CD4-positive, alpha-beta T cell (primary cell): ENCODE measurements at regions of chr5 and their contacts with region 1.

Region 1: DNA sequence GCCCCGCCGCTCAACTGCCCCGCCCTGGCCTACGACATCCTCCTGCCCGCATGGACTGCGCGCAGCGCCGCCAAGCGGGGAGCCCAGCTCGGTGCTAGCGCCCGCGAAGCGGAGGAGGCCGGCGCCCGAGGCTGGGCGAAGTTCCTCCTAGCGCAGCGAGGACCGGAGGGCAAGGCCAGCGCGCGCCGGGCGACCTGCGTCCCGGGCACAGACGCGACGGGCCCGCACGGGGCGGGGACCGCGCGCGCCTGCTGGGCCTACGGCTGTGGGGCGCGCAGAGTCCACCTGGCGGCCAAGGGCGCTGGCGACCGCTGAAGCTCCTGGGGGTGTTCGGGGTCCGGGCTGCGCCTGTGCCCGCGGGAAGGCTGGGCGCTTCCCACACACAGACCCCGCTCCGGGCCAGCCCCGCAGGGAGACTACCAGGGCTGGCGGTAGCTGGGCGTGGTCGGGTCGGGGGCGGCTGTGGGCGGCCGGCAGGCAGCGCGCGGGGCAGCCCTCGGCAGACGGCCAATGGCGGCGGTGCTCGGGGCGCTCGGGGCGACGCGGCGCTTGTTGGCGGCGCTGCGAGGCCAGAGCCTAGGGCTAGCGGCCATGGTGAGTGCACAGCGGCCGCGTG is at the start of gene PCBD2:
- DNase-seq: peak; percentile 83 to 96 (median 90)
- ATAC-seq: peak; percentile 85
- H3K4me3 ChIP-seq: peak within 1 kb of the TSS; percentile 87
- H3K4me3 Mint-ChIP-seq: peak within 1 kb of the TSS; percentile 99
- H3K27ac ChIP-seq: peak within 1 kb of the TSS; percentile 83 to 85
- H3K27ac Mint-ChIP-seq: peak within 1 kb of the TSS; percentile 95
- H3K4me1 ChIP-seq: peaks cover 22% of the 10 kb centered on the region
- H3K4me1 Mint-ChIP-seq: peaks cover 15% of the 10 kb centered on the region
- H3K27me3 ChIP-seq: no peaks in the 10 kb centered on the region
- H3K27me3 Mint-ChIP-seq: no peaks in the 10 kb centered on the region
- CTCF ChIP-seq: peak; percentile 81
- total RNA-seq, gene PCBD2: 5.2 to 5.8 TPM

Region 2: DNA sequence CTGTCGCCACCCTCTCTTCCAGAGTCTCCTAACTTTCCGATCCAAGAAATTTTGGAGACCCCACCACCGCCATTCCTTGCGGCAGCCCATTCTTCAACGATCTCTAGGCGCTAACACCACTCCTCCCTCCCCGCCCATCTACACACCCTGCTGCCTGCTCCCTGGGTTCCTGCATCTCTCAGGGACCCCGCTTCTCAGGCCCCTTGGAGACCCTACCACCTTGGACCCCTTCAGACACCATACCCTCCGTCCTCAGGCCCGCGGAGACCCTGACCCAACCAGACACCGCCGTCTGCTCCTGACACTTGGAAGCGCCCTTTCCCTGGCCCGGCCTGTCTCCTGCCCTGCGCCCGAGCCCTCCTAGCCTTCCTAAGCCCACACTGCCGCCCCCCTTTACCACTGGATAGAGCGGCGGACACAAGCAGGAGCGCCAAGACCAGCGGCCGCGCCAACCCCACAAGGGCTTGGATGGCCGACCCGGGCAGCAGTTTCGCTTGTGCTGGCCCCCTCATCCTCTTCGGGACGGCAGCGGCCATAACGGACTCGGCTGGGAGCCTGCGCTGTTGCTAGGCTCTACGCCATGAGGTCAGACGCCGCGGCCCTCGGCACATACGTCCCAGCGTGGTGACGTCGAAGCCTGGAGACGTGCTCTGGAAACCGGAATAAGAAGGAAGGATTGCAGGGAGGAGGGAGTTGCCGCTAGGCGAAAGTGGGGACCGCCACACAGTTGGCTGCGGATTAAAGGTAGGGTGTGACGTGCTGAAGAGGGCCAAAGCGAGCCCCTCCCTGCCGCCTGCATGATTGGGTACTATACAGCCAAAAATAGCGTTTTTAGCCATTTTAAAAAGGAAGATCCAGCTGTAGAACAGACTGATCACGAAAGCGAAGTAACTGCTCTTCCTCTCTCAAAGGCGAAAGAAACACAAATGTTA is 936.4 kb before region 1 on chr5 and contains the start of gene C5orf15:
- CTCF ChIA-PET with region 1: no interaction called
- POLR2A ChIA-PET with region 1: no interaction called
- intact Hi-C with region 1: loop called in 1 of 2 experiments (anchors 10 kb)
- DNase-seq: peak; percentile 74 to 98 (median 89)
- ATAC-seq: peak; percentile 91
- H3K4me3 ChIP-seq: peak within 1 kb of the TSS; percentile 95
- H3K4me3 Mint-ChIP-seq: peak within 1 kb of the TSS; percentile 94
- H3K27ac ChIP-seq: peak within 1 kb of the TSS; percentile 82 to 86
- H3K27ac Mint-ChIP-seq: peak within 1 kb of the TSS; percentile 98
- H3K4me1 ChIP-seq: peaks cover 20% of the 10 kb centered on the region
- H3K4me1 Mint-ChIP-seq: peaks cover 57% of the 10 kb centered on the region
- H3K27me3 ChIP-seq: no peaks in the 10 kb centered on the region
- H3K27me3 Mint-ChIP-seq: no peaks in the 10 kb centered on the region
- CTCF ChIP-seq: no peak
- total RNA-seq, gene C5orf15: 12.3 to 15.5 TPM

Region 3: GRCh38 chr5:134648425-134649162 is 256.1 kb before region 1 on chr5 and contains the start of gene SEC24A:
- CTCF ChIA-PET with region 1: no interaction called
- POLR2A ChIA-PET with region 1: no interaction called
- intact Hi-C with region 1: loop called in 1 of 2 experiments (anchors 5 kb)
- DNase-seq: peak; percentile 74 to 98 (median 82)
- ATAC-seq: peak; percentile 78
- H3K4me3 ChIP-seq: peak within 1 kb of the TSS; percentile 80
- H3K4me3 Mint-ChIP-seq: peak within 1 kb of the TSS; percentile 99
- H3K27ac ChIP-seq: peak within 1 kb of the TSS; percentile 93 to 98
- H3K27ac Mint-ChIP-seq: peak within 1 kb of the TSS; percentile 95
- H3K4me1 ChIP-seq: peaks cover 27% of the 10 kb centered on the region
- H3K4me1 Mint-ChIP-seq: peaks cover 31% of the 10 kb centered on the region
- H3K27me3 ChIP-seq: no peaks in the 10 kb centered on the region
- H3K27me3 Mint-ChIP-seq: no peaks in the 10 kb centered on the region
- CTCF ChIP-seq: no peak
- total RNA-seq, gene SEC24A: 11.7 to 12.3 TPM

Region 4: GRCh38 chr5:134784241-134784920 is 120.4 kb before region 1 on chr5:
- CTCF ChIA-PET with region 1: interaction called, 13 read pairs
- POLR2A ChIA-PET with region 1: interaction called, 7 read pairs
- intact Hi-C with region 1: loop called (anchors 1 to 2 kb)
- DNase-seq: peak in 5 of 14 experiments; percentile 9 to 39 (median 29)
- ATAC-seq: no peak
- H3K4me3 ChIP-seq: no peak overlapping the region
- H3K4me3 Mint-ChIP-seq: no peak overlapping the region
- H3K27ac ChIP-seq: no peak overlapping the region
- H3K27ac Mint-ChIP-seq: no peak overlapping the region
- H3K4me1 ChIP-seq: no peaks in the 10 kb centered on the region
- H3K4me1 Mint-ChIP-seq: no peaks in the 10 kb centered on the region
- H3K27me3 ChIP-seq: no peaks in the 10 kb centered on the region
- H3K27me3 Mint-ChIP-seq: no peaks in the 10 kb centered on the region
- CTCF ChIP-seq: peak; percentile 25

Region 5: GRCh38 chr5:134873987-134874830 is 30.5 kb before region 1 on chr5 and contains the start of gene TXNDC15:
- CTCF ChIA-PET with region 1: interaction called, 20 read pairs
- POLR2A ChIA-PET with region 1: interaction called, 52 read pairs
- intact Hi-C with region 1: loop called (anchors 1 to 2 kb)
- DNase-seq: peak; percentile 66 to 92 (median 76)
- ATAC-seq: peak; percentile 92
- H3K4me3 ChIP-seq: peak within 1 kb of the TSS; percentile 68
- H3K4me3 Mint-ChIP-seq: peak within 1 kb of the TSS; percentile 96
- H3K27ac ChIP-seq: peak within 1 kb of the TSS; percentile 87 to 88
- H3K27ac Mint-ChIP-seq: peak within 1 kb of the TSS; percentile 93
- H3K4me1 ChIP-seq: peaks cover 39% of the 10 kb centered on the region
- H3K4me1 Mint-ChIP-seq: peaks cover 43% of the 10 kb centered on the region
- H3K27me3 ChIP-seq: no peaks in the 10 kb centered on the region
- H3K27me3 Mint-ChIP-seq: no peaks in the 10 kb centered on the region
- CTCF ChIP-seq: no peak
- total RNA-seq, gene TXNDC15: 19.6 to 20.0 TPM